ENCODE measurements at regions of chr20 and their contacts with region 1.

Region 1: GRCh38 chr20:37804584-37805566 is 98.1 kb upstream of the VSTM2L start:
- DNase-seq: no peak
- ATAC-seq: no peak
- H3K4me3 ChIP-seq: no peak overlapping the region
- H3K27ac ChIP-seq: no peak overlapping the region
- H3K4me1 ChIP-seq: no peaks in the 10 kb centered on the region
- H3K27me3 ChIP-seq: no peaks in the 10 kb centered on the region
- CTCF ChIP-seq: no peak
- POLR2A ChIP-seq: no peak

Region 2: GRCh38 chr20:37657924-37658804 is 146.7 kb before region 1 on chr20:
- in situ Hi-C with region 1: no loop called
- intact Hi-C with region 1: no loop called
- DNase-seq: no peak
- ATAC-seq: no peak
- H3K4me3 ChIP-seq: no peak overlapping the region
- H3K27ac ChIP-seq: no peak overlapping the region
- H3K4me1 ChIP-seq: no peaks in the 10 kb centered on the region
- H3K27me3 ChIP-seq: no peaks in the 10 kb centered on the region
- CTCF ChIP-seq: no peak
- POLR2A ChIP-seq: no peak

Region 3: DNA sequence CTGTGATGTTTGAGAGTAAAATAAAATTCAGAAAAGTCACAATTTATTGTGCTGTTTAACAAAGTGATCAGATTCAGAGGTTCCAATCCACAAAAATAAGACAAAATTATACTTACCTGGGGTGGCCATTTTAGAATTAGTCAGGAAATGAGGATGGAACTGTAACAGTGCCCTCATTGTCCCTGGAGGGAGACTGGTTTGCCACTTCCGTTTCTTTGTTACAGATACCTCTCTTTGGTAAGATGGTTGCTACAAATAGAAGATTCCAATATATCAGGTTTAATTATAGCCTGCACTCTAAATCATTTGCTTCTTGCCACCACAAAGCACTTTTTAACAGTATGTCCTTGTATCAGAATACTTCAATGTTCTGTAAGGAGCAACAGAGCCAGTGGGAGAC is 15.5 kb before region 1 on chr20:
- in situ Hi-C with region 1: no loop called
- intact Hi-C with region 1: no loop called
- DNase-seq: no peak
- ATAC-seq: no peak
- H3K4me3 ChIP-seq: no peak overlapping the region
- H3K27ac ChIP-seq: no peak overlapping the region
- H3K4me1 ChIP-seq: peaks cover 0 to 7% of the 10 kb centered on the region in 2 donors
- H3K27me3 ChIP-seq: no peaks in the 10 kb centered on the region
- CTCF ChIP-seq: no peak
- POLR2A ChIP-seq: no peak

Region 4: GRCh38 chr20:37901654-37902503 is 97.0 kb after region 1 on chr20:
- in situ Hi-C with region 1: loop called in 1 of 4 experiments (anchors 25 kb)
- intact Hi-C with region 1: no loop called
- DNase-seq: peak; percentile 17 to 45
- ATAC-seq: peak; percentile 66 to 75
- H3K4me3 ChIP-seq: peak overlapping the region in 1 of 4 donors; percentile 46
- H3K27ac ChIP-seq: no peak overlapping the region
- H3K4me1 ChIP-seq: peaks cover 0 to 6% of the 10 kb centered on the region in 2 donors
- H3K27me3 ChIP-seq: peaks cover 38 to 61% (median 44%) of the 10 kb centered on the region in 3 donors
- CTCF ChIP-seq: peak in 4 of 5 experiments; percentile 25 to 68 (median 38)
- POLR2A ChIP-seq: no peak